T-cell (primary cell): ENCODE measurements at regions of chr1 and their contacts with region 1.

Region 1: GRCh38 chr1:220124542-220124941 is 30.6 kb downstream of the IARS2 start:
- DNase-seq: no peak
- ATAC-seq: no peak
- H3K4me3 ChIP-seq: no peak overlapping the region
- H3K4me3 Mint-ChIP-seq: no peak overlapping the region
- H3K27ac ChIP-seq: no peak overlapping the region
- H3K27ac Mint-ChIP-seq: peak overlapping the region in 1 of 2 donors; percentile 46
- H3K4me1 ChIP-seq: peaks cover 0 to 2% of the 10 kb centered on the region in 2 experiments
- H3K4me1 Mint-ChIP-seq: peaks cover 3 to 13% (median 5%) of the 10 kb centered on the region in 3 donors
- H3K27me3 ChIP-seq: no peaks in the 10 kb centered on the region
- H3K27me3 Mint-ChIP-seq: no peaks in the 10 kb centered on the region

Region 2: DNA sequence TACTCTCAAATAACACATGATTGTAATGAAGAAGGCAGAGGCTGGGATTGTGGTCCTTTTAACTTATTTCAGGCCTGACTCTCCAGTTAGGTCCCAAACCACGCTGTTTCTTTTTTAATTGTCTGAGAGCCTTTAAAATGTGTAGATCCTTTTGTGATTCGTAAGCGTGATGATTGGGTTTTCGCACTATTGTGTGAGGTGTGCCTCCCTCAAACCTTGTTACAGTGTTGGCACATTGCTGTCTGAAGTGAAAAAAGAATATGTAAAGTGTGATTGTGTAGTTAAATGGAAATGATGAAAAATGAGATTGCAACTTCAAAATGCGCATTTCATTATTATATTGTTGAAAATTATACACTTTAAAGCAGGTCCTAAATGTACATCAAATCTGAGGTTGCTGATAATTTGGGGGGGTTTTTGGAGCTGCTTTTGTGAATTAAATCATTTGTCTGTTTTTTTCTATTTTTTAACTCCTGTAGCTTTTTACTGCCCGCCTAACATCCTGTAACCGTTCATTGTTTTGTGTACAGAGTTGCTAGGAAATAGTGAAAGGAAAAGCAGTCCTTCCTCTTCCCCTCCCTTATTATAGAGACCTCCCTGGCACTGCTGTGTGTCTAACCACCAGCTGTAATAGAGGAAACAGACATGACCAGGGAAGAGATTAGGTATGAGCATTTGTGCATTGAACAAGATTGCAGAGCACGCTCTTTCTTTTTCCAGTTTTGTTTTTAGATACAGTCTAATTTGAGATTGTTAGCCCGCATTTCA is 12.7 kb after region 1 on chr1:
- CTCF ChIA-PET with region 1: interaction called, 4 to 9 read pairs
- POLR2A ChIA-PET with region 1: interaction called in 1 of 2 experiments, 10 read pairs
- DNase-seq: peak in 5 of 35 experiments; percentile 1 to 43 (median 6)
- ATAC-seq: peak; percentile 45 to 98 (median 52)
- H3K4me3 ChIP-seq: no peak overlapping the region
- H3K4me3 Mint-ChIP-seq: no peak overlapping the region
- H3K27ac ChIP-seq: peak overlapping the region; percentile 50
- H3K27ac Mint-ChIP-seq: peak overlapping the region; percentile 56
- H3K4me1 ChIP-seq: peaks cover 0 to 7% of the 10 kb centered on the region in 2 experiments
- H3K4me1 Mint-ChIP-seq: peaks cover 8 to 16% (median 14%) of the 10 kb centered on the region in 3 donors
- H3K27me3 ChIP-seq: no peaks in the 10 kb centered on the region
- H3K27me3 Mint-ChIP-seq: no peaks in the 10 kb centered on the region